GM10248 (cell line): ENCODE measurements at regions of chr5 and their contacts with region 1.

Region 1: GRCh38 chr5:138077065-138077696 is 6.7 kb upstream of the WNT8A start:
- DNase-seq: peak; percentile 63
- CTCF ChIP-seq: peak; percentile 71

Region 2: GRCh38 chr5:138035605-138036537 is 41.3 kb before region 1 on chr5:
- CTCF ChIA-PET with region 1: interaction called, 43 read pairs
- POLR2A ChIA-PET with region 1: no interaction called
- DNase-seq: peak; percentile 56
- CTCF ChIP-seq: peak; percentile 93

Region 3: GRCh38 chr5:138093036-138093435 is 15.9 kb after region 1 on chr5:
- CTCF ChIA-PET with region 1: interaction called, 24 read pairs
- POLR2A ChIA-PET with region 1: no interaction called
- DNase-seq: no peak
- CTCF ChIP-seq: no peak

Region 4: GRCh38 chr5:138128334-138128733 is 51.2 kb after region 1 on chr5:
- CTCF ChIA-PET with region 1: interaction called, 130 read pairs
- POLR2A ChIA-PET with region 1: no interaction called
- DNase-seq: no peak
- CTCF ChIP-seq: no peak

Region 5: DNA sequence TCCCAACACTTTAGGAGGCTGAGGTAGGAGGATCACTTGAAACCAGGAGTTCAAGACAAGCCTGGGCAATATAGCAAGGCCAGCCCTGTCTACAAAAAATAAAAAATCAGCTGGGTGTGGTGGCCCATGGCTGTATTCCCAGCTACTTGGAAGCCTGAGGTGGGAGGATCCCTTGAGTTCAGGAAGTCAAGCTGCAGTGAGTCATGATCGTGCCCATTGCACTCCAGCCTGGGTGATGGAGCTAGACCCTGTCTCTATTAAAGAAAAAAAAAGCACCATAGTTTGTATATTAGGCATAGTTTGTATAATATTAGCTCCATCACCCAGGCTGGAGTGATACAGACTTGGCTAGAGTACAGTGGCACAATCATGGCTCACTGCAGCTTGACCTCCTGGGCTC is 71.6 kb after region 1 on chr5:
- CTCF ChIA-PET with region 1: interaction called, 13 read pairs
- POLR2A ChIA-PET with region 1: no interaction called
- DNase-seq: no peak
- CTCF ChIP-seq: no peak

Region 6: DNA sequence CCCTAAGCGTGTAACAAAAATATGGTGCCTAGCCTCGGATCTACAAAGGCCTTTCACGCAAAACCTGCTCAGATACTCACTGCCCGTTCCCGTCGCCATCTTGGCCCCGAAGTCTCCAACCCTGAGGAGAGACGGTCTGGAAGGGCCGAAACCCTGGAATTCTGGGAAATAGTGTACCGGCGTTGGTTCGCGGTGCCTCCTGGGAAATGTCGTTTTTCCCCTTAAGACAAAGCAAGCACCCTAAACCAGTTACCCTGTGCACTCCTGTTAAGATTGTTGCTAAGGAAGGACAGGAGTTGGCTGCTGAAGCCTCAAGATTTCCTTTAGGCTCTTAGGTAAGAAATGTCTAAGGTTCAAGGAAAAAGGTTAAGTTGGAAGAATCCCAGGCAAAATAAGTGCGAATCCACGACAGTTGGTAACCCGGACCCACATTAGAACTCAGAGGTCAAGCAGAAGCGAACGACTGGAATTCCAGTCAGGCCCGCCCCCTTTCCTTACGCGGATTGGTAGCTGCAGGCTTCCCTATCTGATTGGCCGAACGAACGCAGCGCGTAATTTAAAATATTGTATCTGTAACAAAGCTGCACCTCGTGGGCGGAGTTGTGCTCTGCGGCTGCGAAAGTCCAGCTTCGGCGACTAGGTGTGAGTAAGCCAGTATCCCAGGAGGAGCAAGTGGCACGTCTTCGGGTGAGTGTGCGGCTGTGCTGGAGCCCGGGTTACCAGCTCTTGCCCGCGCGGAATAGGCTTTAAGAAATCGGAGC is 101.5 kb after region 1 on chr5 and contains the starts of genes BRD8 and KIF20A:
- CTCF ChIA-PET with region 1: no interaction called
- POLR2A ChIA-PET with region 1: no interaction called
- DNase-seq: peak; percentile 93
- CTCF ChIP-seq: no peak

Region 7: GRCh38 chr5:139126711-139127111 is 1049.5 kb after region 1 on chr5:
- CTCF ChIA-PET with region 1: no interaction called
- POLR2A ChIA-PET with region 1: no interaction called
- DNase-seq: no peak
- CTCF ChIP-seq: no peak